HCT116 (cell line): ENCODE measurements at regions of chr1 and their contacts with region 1.

Region 1: GRCh38 chr1:176559878-176560277 is 96.9 kb downstream of the PAPPA2 start:
- DNase-seq: peak; percentile 44
- ATAC-seq: peak; percentile 95
- H3K4me3 ChIP-seq: no peak overlapping the region
- H3K27ac ChIP-seq: no peak overlapping the region
- H3K4me1 ChIP-seq: no peaks in the 10 kb centered on the region
- H3K27me3 ChIP-seq: peaks cover 25% of the 10 kb centered on the region
- CTCF ChIP-seq: peak; percentile 67 to 91 (median 74)
- POLR2A ChIP-seq: no peak
- RAD21 ChIP-seq: peak; percentile 87

Region 2: DNA sequence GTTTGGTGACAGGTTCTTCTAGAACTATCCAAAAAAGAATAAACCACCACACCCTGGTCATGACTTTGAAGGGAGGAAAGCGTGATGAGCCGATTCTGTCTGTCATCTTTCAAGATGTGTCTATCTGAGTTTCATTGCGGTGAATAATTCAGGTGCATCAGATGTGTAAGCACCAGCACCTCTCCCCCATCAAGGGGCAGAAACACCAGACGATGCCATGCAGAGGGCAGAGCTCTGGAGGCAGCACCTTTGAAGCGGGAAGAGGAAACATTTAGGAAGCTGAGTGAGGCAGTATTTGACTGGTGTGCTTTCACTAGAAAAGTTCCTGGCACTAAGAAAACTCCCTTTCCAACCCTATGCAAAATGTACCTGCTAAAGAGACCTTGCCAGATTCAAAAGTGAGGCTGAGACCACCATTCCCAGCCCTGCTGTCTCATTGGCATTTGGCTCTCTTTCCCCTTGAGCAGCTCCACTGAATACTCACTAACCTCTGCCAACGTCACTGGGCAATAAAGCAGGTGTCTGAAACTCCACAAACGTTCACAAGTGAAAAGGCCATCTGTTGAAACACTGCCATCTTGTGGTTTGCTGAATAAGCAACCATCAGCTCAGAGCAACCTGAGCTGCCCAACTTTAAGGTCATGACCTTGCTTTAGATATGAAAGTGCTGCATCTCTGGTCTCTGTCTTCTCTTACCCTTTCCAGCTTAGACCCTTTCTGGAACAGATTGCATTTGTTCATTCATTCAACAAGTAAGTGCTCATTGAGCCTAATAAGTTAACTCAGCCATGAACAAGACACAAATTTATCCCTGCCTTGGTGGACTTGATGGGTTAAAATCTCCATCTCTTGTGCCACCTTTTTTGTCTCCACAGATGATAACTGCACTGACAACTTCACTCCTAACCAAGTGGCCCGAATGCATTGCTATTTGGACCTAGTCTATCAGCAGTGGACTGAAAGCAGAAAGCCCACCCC is 131.7 kb after region 1 on chr1:
- CTCF ChIA-PET with region 1: interaction called, 8 read pairs
- POLR2A ChIA-PET with region 1: no interaction called
- RAD21 ChIA-PET with region 1: no interaction called
- intact Hi-C with region 1: loop called (anchors 1 kb)
- DNase-seq: peak; percentile 47
- ATAC-seq: peak; percentile 82
- H3K4me3 ChIP-seq: no peak overlapping the region
- H3K27ac ChIP-seq: no peak overlapping the region
- H3K4me1 ChIP-seq: peaks cover 0 to 5% of the 10 kb centered on the region in 2 experiments; a peak in 1 of 4 replicates
- H3K27me3 ChIP-seq: peaks cover 30% of the 10 kb centered on the region
- CTCF ChIP-seq: peak; percentile 49 to 69 (median 68); a peak in 5 of 6 replicates
- POLR2A ChIP-seq: no peak
- RAD21 ChIP-seq: peak; percentile 63

Region 3: GRCh38 chr1:176843352-176844297 is 283.7 kb after region 1 on chr1:
- CTCF ChIA-PET with region 1: no interaction called
- POLR2A ChIA-PET with region 1: no interaction called
- RAD21 ChIA-PET with region 1: no interaction called
- intact Hi-C with region 1: loop called (anchors 1 kb)
- DNase-seq: peak; percentile 7
- ATAC-seq: no peak
- H3K4me3 ChIP-seq: no peak overlapping the region
- H3K27ac ChIP-seq: no peak overlapping the region
- H3K4me1 ChIP-seq: no peaks in the 10 kb centered on the region
- H3K27me3 ChIP-seq: peaks cover 9% of the 10 kb centered on the region
- CTCF ChIP-seq: peak in 2 of 3 experiments; percentile 8 to 47; a peak in 3 of 6 replicates
- POLR2A ChIP-seq: no peak
- RAD21 ChIP-seq: peak; percentile 61

Region 4: GRCh38 chr1:176880954-176881595 is 321.2 kb after region 1 on chr1:
- CTCF ChIA-PET with region 1: interaction called, 3 read pairs
- POLR2A ChIA-PET with region 1: no interaction called
- RAD21 ChIA-PET with region 1: no interaction called
- intact Hi-C with region 1: loop called (anchors 1 kb)
- DNase-seq: peak; percentile 51
- ATAC-seq: peak; percentile 98
- H3K4me3 ChIP-seq: no peak overlapping the region
- H3K27ac ChIP-seq: no peak overlapping the region
- H3K4me1 ChIP-seq: no peaks in the 10 kb centered on the region
- H3K27me3 ChIP-seq: peaks cover 22% of the 10 kb centered on the region
- CTCF ChIP-seq: peak; percentile 70 to 87 (median 77)
- POLR2A ChIP-seq: no peak
- RAD21 ChIP-seq: peak; percentile 85